Activated B cell treated with CpG ODN at 0.5 μM for 24 hours (primary cell): ENCODE measurements at regions of chr17 and their contacts with region 1.

Region 1: DNA sequence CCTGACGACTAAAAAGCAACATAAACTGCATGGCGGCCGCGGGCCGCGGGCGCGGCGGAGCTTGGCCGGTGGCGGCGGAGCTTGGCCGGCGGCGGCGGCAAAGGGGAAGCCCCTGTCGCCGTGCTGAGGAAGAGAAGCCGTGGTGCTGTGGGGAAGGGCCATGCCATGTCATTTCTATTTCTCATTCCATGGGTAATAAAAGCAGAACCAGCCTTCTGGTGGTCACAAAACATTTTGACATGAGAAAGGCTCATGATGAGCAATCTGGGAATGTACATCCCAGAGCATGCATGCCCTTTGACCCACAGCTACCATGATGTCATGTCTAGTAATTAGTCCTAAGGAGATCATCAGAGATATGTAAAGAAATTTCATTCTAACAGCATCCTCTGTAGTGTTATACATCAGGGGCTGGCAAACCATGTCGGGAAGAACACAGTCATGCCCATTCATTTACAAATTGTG is 23.9 kb upstream of the HEATR6 start:
- DNase-seq: peak; percentile 48
- ATAC-seq: peak; percentile 92
- H3K4me3 Mint-ChIP-seq: peak overlapping the region; percentile 79
- H3K27ac Mint-ChIP-seq: peak overlapping the region; percentile 76
- H3K4me1 Mint-ChIP-seq: peaks cover 27% of the 10 kb centered on the region
- H3K27me3 Mint-ChIP-seq: no peaks in the 10 kb centered on the region
- CTCF ChIP-seq: no peak

Region 2: DNA sequence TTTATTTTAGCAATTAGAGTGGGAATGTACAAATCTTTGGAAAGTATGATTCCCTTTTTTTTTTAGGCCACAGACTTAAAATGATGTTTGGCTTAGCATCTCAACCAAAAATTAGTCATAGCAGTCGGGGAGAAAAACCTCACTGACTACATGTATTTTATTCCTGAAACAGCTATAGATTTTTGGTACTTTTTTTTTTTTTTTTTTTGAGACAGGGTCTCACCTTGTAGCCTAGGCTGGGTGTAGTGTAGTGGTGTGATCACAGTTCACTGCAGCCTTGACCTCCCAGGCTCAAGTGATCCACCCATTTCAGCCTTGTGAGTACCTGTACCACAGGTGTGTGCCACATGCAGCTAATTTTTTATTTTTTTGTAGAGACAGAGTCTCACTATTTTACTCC is 161.5 kb before region 1 on chr17:
- CTCF ChIA-PET with region 1: no interaction called
- POLR2A ChIA-PET with region 1: no interaction called
- intact Hi-C with region 1: no loop called
- DNase-seq: no peak
- ATAC-seq: no peak
- H3K4me3 Mint-ChIP-seq: no peak overlapping the region
- H3K27ac Mint-ChIP-seq: no peak overlapping the region
- H3K4me1 Mint-ChIP-seq: no peaks in the 10 kb centered on the region
- H3K27me3 Mint-ChIP-seq: no peaks in the 10 kb centered on the region
- CTCF ChIP-seq: no peak

Region 3: DNA sequence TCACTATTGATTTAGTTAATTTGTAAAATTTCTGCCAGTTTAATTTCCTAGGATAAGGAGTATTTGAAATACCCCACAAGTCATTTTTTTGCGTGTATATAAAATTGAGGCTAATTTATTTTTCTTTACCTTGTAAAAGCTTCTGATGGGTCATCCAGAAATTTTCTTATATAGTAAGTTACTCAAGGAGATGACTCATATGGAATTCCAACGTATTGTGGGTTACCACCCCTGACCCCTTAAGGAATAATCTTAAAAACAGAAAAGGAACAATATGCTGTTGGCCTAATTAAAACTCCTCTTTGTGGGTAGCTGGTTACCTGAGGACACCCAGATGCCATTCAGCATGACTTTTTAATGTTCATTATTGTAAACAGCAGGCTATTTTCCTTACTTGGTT is 37.5 kb before region 1 on chr17:
- CTCF ChIA-PET with region 1: no interaction called
- POLR2A ChIA-PET with region 1: no interaction called
- intact Hi-C with region 1: no loop called
- DNase-seq: no peak
- ATAC-seq: no peak
- H3K4me3 Mint-ChIP-seq: no peak overlapping the region
- H3K27ac Mint-ChIP-seq: no peak overlapping the region
- H3K4me1 Mint-ChIP-seq: no peaks in the 10 kb centered on the region
- H3K27me3 Mint-ChIP-seq: no peaks in the 10 kb centered on the region
- CTCF ChIP-seq: no peak

Region 4: DNA sequence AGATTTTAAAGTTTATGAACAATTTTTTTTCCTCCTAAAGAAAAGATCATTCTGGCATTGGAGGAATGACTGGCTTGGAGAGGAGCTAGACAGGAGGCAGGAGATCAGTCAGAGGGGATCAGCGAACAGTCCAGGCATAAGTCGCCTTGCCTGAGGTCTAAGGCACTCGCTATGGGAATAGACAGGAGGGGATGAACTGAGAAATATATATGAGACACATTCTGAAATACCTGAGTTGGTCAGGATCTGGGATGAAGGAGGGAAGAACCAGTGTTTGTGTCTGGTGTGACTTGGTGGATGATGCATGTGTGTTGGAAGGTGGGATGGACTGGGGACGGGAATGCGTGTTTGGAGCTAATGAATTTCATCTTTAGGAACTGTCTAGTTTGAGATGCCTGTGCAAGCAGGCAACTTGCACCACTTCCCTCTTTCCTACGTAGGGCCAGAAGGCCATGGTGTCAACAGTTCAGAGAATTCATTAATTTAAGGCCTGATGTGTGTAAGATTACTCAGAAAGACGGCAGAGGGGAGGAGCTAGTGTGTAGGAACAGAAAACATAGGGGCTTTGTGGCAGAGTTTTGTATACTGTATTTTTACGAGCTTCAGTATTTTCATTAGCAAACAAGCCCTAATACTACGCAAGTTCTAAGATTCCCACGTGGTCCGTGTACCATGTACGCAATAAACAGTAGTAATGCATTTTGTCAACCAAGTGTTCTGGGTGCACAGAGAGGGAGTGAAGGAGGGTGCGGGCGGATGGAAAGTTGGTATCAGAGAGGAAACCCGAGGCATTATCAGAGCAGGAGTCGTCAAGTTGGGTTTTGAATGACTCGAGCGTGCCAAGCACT is 24.8 kb before region 1 on chr17:
- CTCF ChIA-PET with region 1: no interaction called
- POLR2A ChIA-PET with region 1: interaction called, 4 read pairs
- intact Hi-C with region 1: loop called (anchors 1 kb)
- DNase-seq: no peak
- ATAC-seq: peak; percentile 51
- H3K4me3 Mint-ChIP-seq: peak overlapping the region; percentile 94
- H3K27ac Mint-ChIP-seq: peak overlapping the region; percentile 86
- H3K4me1 Mint-ChIP-seq: peaks cover 40% of the 10 kb centered on the region
- H3K27me3 Mint-ChIP-seq: no peaks in the 10 kb centered on the region
- CTCF ChIP-seq: no peak

Region 5: GRCh38 chr17:60161674-60162546 is 59.2 kb after region 1 on chr17:
- CTCF ChIA-PET with region 1: no interaction called
- POLR2A ChIA-PET with region 1: no interaction called
- intact Hi-C with region 1: no loop called
- DNase-seq: no peak
- ATAC-seq: no peak
- H3K4me3 Mint-ChIP-seq: no peak overlapping the region
- H3K27ac Mint-ChIP-seq: no peak overlapping the region
- H3K4me1 Mint-ChIP-seq: peaks cover 10% of the 10 kb centered on the region
- H3K27me3 Mint-ChIP-seq: peaks cover 19% of the 10 kb centered on the region
- CTCF ChIP-seq: no peak

Region 6: GRCh38 chr17:60704170-60704569 is 601.5 kb after region 1 on chr17:
- CTCF ChIA-PET with region 1: no interaction called
- POLR2A ChIA-PET with region 1: no interaction called
- intact Hi-C with region 1: no loop called
- DNase-seq: no peak
- ATAC-seq: no peak
- H3K4me3 Mint-ChIP-seq: no peak overlapping the region
- H3K27ac Mint-ChIP-seq: no peak overlapping the region
- H3K4me1 Mint-ChIP-seq: no peaks in the 10 kb centered on the region
- H3K27me3 Mint-ChIP-seq: no peaks in the 10 kb centered on the region
- CTCF ChIP-seq: no peak